IMR-90 (cell line): ENCODE measurements at regions of chr20 and their contacts with region 1.

Region 1: GRCh38 chr20:51326201-51326819 is 216.2 kb downstream of the NFATC2 start:
- DNase-seq: peak; percentile 76
- ATAC-seq: 0 out of 2 replicates have a peak, but pooled peaks have one; percentile 16
- H3K4me3 ChIP-seq: no peak overlapping the region
- H3K27ac ChIP-seq: no peak overlapping the region; the same call in 1 of the 2 replicates
- H3K4me1 ChIP-seq: peaks cover 18% of the 10 kb centered on the region
- H3K27me3 ChIP-seq: no peaks in the 10 kb centered on the region
- CTCF ChIP-seq: peak; percentile 63
- POLR2A ChIP-seq: peak; percentile 85; the same call in 1 of the 2 replicates
- RAD21 ChIP-seq: peak; percentile 48

Region 2: DNA sequence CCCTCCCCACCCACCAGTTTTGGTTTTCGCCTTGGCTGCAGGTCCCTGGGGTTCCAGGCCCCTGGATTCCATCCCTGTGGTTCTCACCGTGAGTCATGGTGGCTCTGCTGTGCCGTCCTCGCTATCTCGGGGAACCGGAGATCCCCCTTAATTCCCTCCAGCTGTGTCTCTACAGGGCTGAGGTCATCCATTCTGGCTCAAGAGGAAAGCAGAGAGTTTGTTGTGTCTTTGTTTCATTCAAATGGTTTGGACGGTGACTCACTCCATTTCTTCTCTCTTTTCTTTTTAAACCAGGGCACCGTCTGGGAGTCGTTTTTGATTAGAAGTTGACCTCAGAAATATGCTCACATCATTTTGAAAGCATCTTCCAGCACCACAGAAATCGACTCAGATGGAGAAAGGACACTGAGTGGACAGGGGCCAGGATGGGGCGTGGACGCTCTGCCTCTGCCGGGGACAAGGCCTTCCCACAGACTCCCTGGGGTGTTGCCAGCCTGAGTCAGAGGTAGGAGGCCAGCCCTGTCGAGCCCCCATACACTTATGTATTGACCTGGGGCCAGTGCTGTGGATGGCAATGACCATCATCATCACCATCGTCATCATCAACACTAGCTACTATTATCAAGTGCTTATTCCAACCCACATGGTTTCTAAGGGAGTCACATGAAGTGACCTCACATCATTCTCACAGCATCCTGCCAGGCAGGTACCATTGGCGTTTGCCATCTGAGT is 40.0 kb after region 1 on chr20:
- CTCF ChIA-PET with region 1: no interaction called
- POLR2A ChIA-PET with region 1: no interaction called
- dilution Hi-C with region 1: no loop called
- in situ Hi-C with region 1: no loop called
- intact Hi-C with region 1: loop called (anchors 1 kb)
- DNase-seq: peak; percentile 100
- ATAC-seq: peak; percentile 89
- H3K4me3 ChIP-seq: no peak overlapping the region
- H3K27ac ChIP-seq: peak overlapping the region; percentile 91
- H3K4me1 ChIP-seq: peaks cover 21% of the 10 kb centered on the region
- H3K27me3 ChIP-seq: no peaks in the 10 kb centered on the region
- CTCF ChIP-seq: no peak
- POLR2A ChIP-seq: no peak; the same call in 1 of the 2 replicates
- RAD21 ChIP-seq: no peak